ENCODE measurements at regions of chr10 and their contacts with region 1.

Region 1: DNA sequence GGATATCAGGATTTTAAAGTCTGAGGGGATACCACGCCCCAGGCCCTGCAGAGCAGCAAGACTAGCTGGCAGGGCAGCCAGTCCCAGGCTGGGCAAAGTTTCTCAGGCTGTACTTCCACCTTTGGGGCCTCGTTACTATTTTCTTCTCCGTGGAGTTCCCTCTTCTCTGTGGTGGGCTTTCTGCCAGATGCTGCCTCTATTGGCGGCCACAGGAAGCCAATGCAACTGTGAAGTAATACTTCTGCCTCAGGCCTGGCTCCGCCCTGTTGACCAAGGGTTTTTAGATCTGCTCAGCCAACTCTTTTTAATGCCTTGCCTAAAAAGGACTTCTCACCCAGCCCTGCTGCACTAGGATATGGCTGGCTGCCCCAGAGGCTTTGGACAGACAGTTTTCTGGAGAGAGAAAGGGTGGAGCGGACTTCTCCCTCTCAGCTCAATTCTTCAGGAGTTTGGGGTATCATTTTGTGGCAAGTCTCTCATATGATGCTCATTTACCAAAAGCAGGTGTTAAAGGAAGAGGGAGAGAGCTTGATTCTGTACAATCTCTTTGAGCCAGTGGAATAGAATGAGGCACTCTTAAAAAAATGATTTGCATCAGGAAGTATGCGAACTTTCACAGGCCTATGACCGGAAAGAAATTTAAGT is 67.4 kb downstream of the HHEX start:
- DNase-seq: peak; percentile 85 to 91 (median 87)
- ATAC-seq: peak; percentile 93 to 97 (median 96)
- H3K4me3 ChIP-seq: no peak overlapping the region
- H3K27ac ChIP-seq: peak overlapping the region in 11 of 12 donors; percentile 15 to 83 (median 62)
- H3K4me1 ChIP-seq: peaks cover 0 to 62% (median 19%) of the 10 kb centered on the region in 12 donors
- H3K27me3 ChIP-seq: no peaks in the 10 kb centered on the region
- CTCF ChIP-seq: peak in 4 of 12 donors; percentile 13 to 44 (median 40)
- POLR2A ChIP-seq: no peak

Region 2: DNA sequence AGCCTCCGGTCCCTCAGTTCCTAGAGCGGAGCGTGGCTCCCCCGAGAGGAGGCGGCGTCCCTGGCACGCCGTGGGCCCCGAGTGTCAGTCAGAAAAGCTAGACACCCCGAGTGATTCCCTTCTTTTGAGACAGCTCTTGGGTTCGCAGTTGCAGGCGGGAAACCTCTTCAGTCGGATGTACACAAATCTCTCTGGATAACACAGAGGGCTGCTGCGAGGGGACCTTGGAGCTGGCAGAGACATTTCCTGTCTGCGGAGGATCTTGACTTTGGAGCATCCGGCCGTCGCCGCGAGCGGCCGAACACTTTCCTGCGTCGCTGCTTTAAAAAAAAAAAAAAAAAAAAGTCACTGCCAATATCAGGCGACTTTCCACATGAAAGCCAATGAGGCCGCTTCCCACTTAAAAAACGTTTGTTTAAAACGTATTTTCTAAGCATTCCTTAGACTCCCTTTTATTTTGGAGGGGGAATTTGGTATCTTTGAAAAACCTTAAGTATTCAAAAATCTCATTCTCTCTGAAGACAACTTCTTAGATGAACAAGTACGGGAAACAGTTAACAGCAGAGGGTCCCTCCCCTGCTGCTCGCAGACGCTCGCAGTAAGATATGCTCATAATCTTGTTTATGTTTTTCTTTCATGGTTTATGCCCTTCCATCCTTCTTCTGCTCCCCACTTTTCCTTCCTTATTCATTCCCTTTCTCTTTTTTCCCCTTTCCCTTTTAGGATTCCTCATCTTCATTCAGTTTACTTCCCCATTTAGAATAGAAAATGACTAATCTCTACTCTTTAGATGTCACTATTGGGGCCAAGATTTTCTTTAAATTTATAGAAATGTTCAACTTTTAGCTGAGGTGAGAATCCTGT is 57.4 kb before region 1 on chr10:
- intact Hi-C with region 1: loop called in 4 of 10 experiments (anchors 5 to 10 kb)
- DNase-seq: peak; percentile 37 to 67 (median 48)
- ATAC-seq: peak in 3 of 4 donors; percentile 52 to 76 (median 58)
- H3K4me3 ChIP-seq: peak overlapping the region in 11 of 12 donors; percentile 10 to 56 (median 45)
- H3K27ac ChIP-seq: peak overlapping the region in 4 of 12 donors; percentile 24 to 40 (median 30)
- H3K4me1 ChIP-seq: peaks cover 0 to 37% (median 10%) of the 10 kb centered on the region in 12 donors
- H3K27me3 ChIP-seq: peaks cover 0 to 65% (median 22%) of the 10 kb centered on the region in 9 donors
- CTCF ChIP-seq: peak in 1 of 12 donors; percentile 5
- POLR2A ChIP-seq: no peak

Region 3: DNA sequence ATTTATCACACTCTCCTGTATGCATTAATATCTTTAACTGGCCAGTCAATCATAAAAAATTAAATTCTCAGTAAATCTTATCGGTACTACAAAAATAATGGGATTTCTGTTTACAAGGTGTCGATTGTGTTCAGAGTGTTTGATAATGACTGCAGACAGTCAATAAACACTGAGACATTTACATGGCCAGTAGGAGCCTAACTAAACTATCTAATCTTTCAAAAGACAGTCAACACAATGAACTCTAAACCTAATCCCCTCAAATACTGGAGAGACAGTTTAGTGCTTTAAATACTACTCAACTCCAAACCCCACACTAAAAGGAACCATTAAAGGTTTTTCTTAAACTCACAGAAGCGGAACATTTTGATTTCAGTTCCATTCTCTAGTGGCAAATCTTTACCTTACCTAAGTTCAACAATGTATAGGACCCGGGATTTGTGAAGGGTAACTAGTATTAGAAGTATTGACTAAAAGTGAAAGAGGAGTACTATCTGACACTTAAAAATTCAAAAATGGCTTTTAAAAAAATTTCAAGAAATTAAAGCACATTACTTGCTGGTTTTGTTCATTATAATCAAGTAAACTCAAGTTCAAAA is 53.8 kb after region 1 on chr10:
- intact Hi-C with region 1: loop called in 2 of 10 experiments (anchors 5 to 10 kb)
- DNase-seq: no peak
- ATAC-seq: no peak
- H3K4me3 ChIP-seq: no peak overlapping the region
- H3K27ac ChIP-seq: no peak overlapping the region
- H3K4me1 ChIP-seq: peaks cover 0 to 7% (median 0%) of the 10 kb centered on the region in 12 donors
- H3K27me3 ChIP-seq: peaks cover 0 to 8% (median 0%) of the 10 kb centered on the region in 9 donors
- CTCF ChIP-seq: no peak
- POLR2A ChIP-seq: no peak

Region 4: DNA sequence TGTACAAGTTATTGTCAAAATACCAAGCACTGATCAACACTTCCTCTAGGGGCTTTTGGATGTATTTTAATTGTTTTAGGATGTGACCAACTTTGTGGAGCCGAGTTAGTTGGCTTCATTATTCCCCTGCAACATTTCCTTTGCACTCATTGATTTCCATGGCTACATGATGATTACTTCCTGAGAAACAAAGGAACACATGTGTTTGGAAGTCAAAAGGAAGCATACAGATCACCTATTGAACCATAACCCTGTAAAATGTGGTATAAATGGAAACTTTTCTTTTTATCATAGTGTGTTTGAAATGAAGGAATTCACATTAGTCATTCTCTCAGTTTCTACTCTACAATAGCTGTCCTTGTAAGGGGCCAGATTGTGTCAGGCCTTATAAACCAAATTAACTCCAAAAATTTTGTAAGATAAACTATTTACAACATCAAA is 58.9 kb after region 1 on chr10:
- intact Hi-C with region 1: loop called in 2 of 10 experiments (anchors 5 to 10 kb)
- DNase-seq: no peak
- ATAC-seq: peak in 2 of 4 donors; percentile 34 to 88
- H3K4me3 ChIP-seq: no peak overlapping the region
- H3K27ac ChIP-seq: peak overlapping the region in 2 of 12 donors; percentile 21 to 29
- H3K4me1 ChIP-seq: peaks cover 0 to 13% (median 0%) of the 10 kb centered on the region in 12 donors
- H3K27me3 ChIP-seq: no peaks in the 10 kb centered on the region
- CTCF ChIP-seq: peak in 2 of 12 donors; percentile 15 to 26
- POLR2A ChIP-seq: no peak

Region 5: DNA sequence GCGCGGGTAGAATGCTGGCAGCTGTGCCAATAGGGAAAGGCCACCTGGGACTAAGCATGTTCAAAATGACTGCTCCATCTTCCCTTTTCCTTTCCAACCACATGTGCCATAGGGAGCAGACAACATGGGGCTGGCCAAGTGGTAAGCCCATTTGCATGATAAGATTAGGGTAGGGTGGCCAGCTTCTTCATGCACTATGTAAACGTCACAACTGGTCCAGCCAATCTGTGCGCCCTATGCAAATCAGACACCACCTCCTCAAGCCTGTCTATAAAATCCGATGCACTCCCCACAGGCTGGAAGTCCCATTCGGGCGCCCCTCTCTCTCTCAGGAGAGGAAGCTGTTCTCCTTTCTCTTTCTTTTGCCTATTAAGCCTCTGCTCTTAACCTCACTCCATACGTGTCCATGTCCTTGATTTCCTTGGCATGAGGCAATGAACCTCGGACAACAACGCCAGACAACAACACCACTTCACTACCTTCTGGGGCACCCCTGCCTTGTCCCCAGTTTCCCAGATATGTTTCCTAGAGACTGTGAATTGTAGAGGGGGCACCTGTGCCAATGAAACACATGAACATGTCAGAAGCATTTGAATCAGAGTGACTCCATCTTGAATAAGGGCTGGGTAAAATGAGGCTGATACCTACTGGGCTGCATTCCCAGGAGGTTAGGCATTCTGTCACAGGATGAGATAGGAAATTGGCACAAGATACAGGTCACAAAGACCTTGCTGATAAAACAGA is 72.0 kb after region 1 on chr10:
- intact Hi-C with region 1: no loop called
- DNase-seq: no peak
- ATAC-seq: peak in 2 of 4 donors; percentile 29 to 56
- H3K4me3 ChIP-seq: no peak overlapping the region
- H3K27ac ChIP-seq: no peak overlapping the region
- H3K4me1 ChIP-seq: peaks cover 0 to 49% (median 6%) of the 10 kb centered on the region in 12 donors
- H3K27me3 ChIP-seq: no peaks in the 10 kb centered on the region
- CTCF ChIP-seq: no peak
- POLR2A ChIP-seq: no peak

Region 6: GRCh38 chr10:92880233-92880861 is 123.2 kb after region 1 on chr10:
- intact Hi-C with region 1: no loop called
- DNase-seq: peak in 1 of 5 donors; percentile 13
- ATAC-seq: peak in 3 of 4 donors; percentile 57 to 69 (median 59)
- H3K4me3 ChIP-seq: no peak overlapping the region
- H3K27ac ChIP-seq: no peak overlapping the region
- H3K4me1 ChIP-seq: peaks cover 0 to 31% (median 0%) of the 10 kb centered on the region in 12 donors
- H3K27me3 ChIP-seq: no peaks in the 10 kb centered on the region
- CTCF ChIP-seq: peak in 11 of 12 donors; percentile 33 to 76 (median 53)
- POLR2A ChIP-seq: no peak

Region 7: DNA sequence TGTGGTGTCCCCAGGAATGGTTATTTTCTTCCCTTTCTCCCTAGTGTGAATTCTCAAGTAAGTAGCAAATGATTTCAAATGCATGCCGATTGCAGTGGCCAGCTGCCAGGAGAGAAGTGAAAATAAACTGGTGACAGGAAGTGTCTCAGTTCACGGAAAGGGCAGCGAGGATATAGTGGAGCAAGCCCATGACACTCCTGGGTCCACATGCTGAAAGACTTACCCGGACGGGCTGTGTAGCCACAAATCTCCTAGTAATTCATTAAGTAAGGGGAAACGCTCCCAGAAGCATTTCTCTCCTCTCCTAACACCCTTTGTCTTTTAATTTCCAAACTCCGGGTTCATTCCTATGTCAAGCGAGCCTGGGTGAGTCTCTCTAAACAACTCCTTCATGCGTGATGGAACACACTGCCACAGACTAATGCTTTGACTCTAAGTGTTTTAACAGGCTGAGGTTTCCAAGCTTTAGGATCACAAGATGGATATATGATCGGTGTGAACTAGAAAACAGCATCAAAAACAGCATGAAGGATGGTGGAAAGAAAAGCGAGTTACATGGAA is 442.1 kb after region 1 on chr10:
- intact Hi-C with region 1: no loop called
- DNase-seq: peak; percentile 65 to 83 (median 75)
- ATAC-seq: peak in 3 of 4 donors; percentile 85 to 91 (median 91)
- H3K4me3 ChIP-seq: peak overlapping the region; percentile 4 to 49 (median 40)
- H3K27ac ChIP-seq: peak overlapping the region in 6 of 12 donors; percentile 4 to 40 (median 34)
- H3K4me1 ChIP-seq: peaks cover 0 to 17% (median 5%) of the 10 kb centered on the region in 12 donors
- H3K27me3 ChIP-seq: peaks cover 0 to 3% (median 0%) of the 10 kb centered on the region in 9 donors
- CTCF ChIP-seq: no peak
- POLR2A ChIP-seq: no peak